ENCODE measurements at regions of chr16 and their contacts with region 1.

Region 1: DNA sequence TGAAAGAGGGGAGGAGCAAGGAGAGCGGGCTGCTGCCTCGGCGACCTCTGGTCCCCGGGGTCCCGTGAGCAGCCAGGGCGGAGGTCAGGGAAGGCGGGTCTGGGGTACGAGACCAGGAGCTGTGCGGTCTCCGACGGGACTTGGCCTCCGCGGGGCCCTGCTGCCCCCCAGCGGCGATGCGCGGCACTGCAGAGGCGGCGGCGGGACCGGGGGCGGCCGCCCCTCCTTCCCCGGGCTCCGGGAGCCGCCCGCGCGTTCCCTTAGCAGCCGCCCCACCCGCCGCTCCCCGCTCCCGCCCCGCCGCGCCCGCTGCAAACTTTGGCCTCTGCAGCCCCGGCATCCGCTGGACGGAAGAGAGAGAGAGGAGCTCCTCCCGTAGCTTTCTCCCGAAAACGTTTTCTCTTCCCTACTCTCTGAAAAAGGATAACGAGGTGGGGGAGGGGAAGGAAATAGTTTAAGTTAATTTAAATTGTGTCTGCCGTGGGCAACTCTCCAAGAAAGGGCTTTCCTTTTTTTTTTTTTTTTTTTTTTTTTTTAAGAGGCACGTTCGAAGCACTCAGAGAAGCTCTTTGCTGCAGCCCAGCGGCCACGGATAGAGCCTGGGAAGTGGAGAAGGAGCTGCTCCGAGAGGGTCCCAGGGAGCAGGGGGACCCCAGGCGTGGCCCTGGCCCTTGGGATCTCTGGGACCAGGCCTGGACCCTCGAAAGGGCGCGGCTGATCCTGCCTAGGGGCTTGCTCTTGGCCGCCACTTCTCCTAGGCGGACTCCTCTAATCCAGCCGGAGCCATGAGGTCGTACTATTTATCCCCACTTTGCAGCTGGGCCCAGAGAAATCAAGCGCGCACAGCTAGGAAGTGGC is 43.2 kb downstream of the C16orf82 start:
- DNase-seq: peak; percentile 91
- H3K4me3 Mint-ChIP-seq: peak overlapping the region; percentile 43
- H3K27ac Mint-ChIP-seq: peak overlapping the region; percentile 40
- H3K4me1 Mint-ChIP-seq: no peaks in the 10 kb centered on the region
- H3K27me3 Mint-ChIP-seq: peaks cover 62% of the 10 kb centered on the region
- CTCF ChIP-seq: peak; percentile 96

Region 2: GRCh38 chr16:27048315-27048714 is 61.6 kb before region 1 on chr16:
- CTCF ChIA-PET with region 1: interaction called, 3 read pairs
- intact Hi-C with region 1: loop called (anchors 10 kb)
- DNase-seq: no peak
- H3K4me3 Mint-ChIP-seq: no peak overlapping the region
- H3K27ac Mint-ChIP-seq: no peak overlapping the region
- H3K4me1 Mint-ChIP-seq: no peaks in the 10 kb centered on the region
- H3K27me3 Mint-ChIP-seq: no peaks in the 10 kb centered on the region
- CTCF ChIP-seq: no peak

Region 3: DNA sequence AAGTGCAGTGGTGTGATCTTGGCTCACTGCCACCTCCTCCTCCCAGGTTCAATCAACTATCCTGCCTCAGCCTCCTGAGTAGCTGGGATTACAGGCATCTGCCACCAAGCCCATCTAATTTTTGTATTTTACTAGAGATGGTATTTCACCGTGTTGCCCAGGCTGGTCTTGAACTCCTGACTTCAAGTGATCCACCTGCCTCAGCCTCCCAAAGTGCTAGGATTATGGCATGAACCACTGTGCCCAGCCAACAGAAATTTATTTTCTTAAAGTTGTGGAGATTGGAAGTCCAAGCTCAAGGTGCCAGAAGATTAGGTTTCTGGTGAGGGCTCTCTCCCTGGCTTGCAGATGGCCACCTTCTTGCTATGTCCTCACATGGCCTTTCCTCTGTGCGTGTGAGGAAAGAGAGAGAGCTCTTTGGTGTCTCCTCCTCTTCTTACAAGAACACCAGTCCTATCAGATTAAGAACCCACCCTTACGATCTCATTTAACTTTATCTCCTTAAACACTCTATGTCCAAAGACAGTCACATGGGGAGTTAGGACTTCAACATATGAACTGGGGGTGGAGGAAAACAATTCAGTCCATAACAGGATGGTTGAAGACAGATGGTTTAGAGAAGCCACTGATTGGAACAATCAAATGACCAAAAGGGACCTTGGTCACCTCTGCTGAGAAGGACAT is 11.4 kb before region 1 on chr16:
- CTCF ChIA-PET with region 1: interaction called, 12 read pairs
- intact Hi-C with region 1: no loop called
- DNase-seq: no peak
- H3K4me3 Mint-ChIP-seq: no peak overlapping the region
- H3K27ac Mint-ChIP-seq: no peak overlapping the region
- H3K4me1 Mint-ChIP-seq: no peaks in the 10 kb centered on the region
- H3K27me3 Mint-ChIP-seq: peaks cover 50% of the 10 kb centered on the region
- CTCF ChIP-seq: no peak

Region 4: GRCh38 chr16:27549859-27550581 is 440.1 kb after region 1 on chr16 and contains the starts of genes GTF3C1 and KATNIP:
- CTCF ChIA-PET with region 1: interaction called, 13 read pairs
- intact Hi-C with region 1: no loop called
- DNase-seq: peak; percentile 100
- H3K4me3 Mint-ChIP-seq: peak within 1 kb of the TSS; percentile 95
- H3K27ac Mint-ChIP-seq: peak within 1 kb of the TSS; percentile 98
- H3K4me1 Mint-ChIP-seq: peaks cover 35% of the 10 kb centered on the region
- H3K27me3 Mint-ChIP-seq: no peaks in the 10 kb centered on the region
- CTCF ChIP-seq: no peak
- total RNA-seq, gene GTF3C1: 88.5 and 90.9 TPM in 2 replicates
- total RNA-seq, gene KATNIP: 37.8 and 46.9 TPM in 2 replicates